ENCODE measurements at regions of chr2 and their contacts with region 1.

Region 1: GRCh38 chr2:102753563-102754159 is 8.2 kb upstream of the TMEM182 start:
- DNase-seq: peak; percentile 54
- H3K4me3 ChIP-seq: no peak overlapping the region
- H3K27ac ChIP-seq: no peak overlapping the region
- H3K4me1 ChIP-seq: peaks cover 2% of the 10 kb centered on the region
- H3K27me3 ChIP-seq: no peaks in the 10 kb centered on the region
- CTCF ChIP-seq: peak; percentile 59 to 62
- POLR2A ChIP-seq: no peak

Region 2: GRCh38 chr2:102304268-102304667 is 449.4 kb before region 1 on chr2:
- CTCF ChIA-PET with region 1: no interaction called
- POLR2A ChIA-PET with region 1: no interaction called
- dilution Hi-C with region 1: no loop called
- intact Hi-C with region 1: no loop called
- DNase-seq: peak; percentile 78
- H3K4me3 ChIP-seq: no peak overlapping the region
- H3K27ac ChIP-seq: peak overlapping the region; percentile 92
- H3K4me1 ChIP-seq: peaks cover 38% of the 10 kb centered on the region
- H3K27me3 ChIP-seq: no peaks in the 10 kb centered on the region
- CTCF ChIP-seq: no peak
- POLR2A ChIP-seq: no peak

Region 3: DNA sequence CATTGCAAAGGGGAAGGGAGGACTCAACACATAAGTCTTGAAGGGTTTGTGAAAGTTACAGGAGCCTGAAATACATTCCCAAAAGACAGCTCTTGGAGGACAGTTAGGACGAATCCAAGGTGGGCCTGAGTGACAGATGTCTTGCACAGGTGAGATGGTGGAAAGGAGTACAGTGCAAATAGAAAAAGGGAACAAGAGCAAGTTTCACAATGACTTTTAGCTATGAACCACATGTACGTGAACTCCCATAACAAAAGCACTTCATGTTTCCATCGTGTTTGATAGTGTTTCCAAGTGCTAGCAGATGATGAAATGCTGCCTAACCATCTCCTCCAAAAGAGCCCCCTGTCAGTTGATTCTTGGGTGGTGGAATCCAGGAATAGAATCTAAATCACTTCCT is 328.9 kb before region 1 on chr2:
- CTCF ChIA-PET with region 1: no interaction called
- POLR2A ChIA-PET with region 1: no interaction called
- dilution Hi-C with region 1: no loop called
- intact Hi-C with region 1: no loop called
- DNase-seq: no peak
- H3K4me3 ChIP-seq: no peak overlapping the region
- H3K27ac ChIP-seq: no peak overlapping the region
- H3K4me1 ChIP-seq: no peaks in the 10 kb centered on the region
- H3K27me3 ChIP-seq: peaks cover 2 to 11% of the 10 kb centered on the region in 2 experiments
- CTCF ChIP-seq: no peak
- POLR2A ChIP-seq: no peak

Region 4: DNA sequence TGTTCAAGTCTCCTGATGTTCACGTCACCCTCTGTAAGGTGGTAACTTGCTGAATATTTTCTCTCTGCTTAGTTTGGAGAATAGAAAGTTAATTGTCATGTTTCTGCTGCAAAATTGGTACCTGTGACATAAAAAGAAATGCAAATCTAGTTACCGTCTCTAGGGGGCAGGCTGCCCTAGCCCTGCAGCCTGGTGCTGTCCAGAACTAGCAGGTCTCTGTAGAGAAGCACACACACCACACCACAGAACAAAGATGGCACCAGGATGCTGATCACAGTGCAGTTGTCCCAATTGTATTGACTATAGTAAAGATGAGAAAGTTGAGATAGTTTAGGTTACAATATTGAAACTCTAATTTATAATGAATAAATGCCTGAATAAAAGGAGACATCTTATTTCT is 233.6 kb before region 1 on chr2:
- CTCF ChIA-PET with region 1: no interaction called
- POLR2A ChIA-PET with region 1: no interaction called
- dilution Hi-C with region 1: no loop called
- intact Hi-C with region 1: no loop called
- DNase-seq: peak; percentile 24
- H3K4me3 ChIP-seq: no peak overlapping the region
- H3K27ac ChIP-seq: no peak overlapping the region
- H3K4me1 ChIP-seq: no peaks in the 10 kb centered on the region
- H3K27me3 ChIP-seq: peaks cover 0 to under 1% of the 10 kb centered on the region in 2 experiments
- CTCF ChIP-seq: peak; percentile 54 to 66
- POLR2A ChIP-seq: no peak

Region 5: GRCh38 chr2:102736410-102737409 is 17.0 kb before region 1 on chr2:
- CTCF ChIA-PET with region 1: interaction called, 70 read pairs
- POLR2A ChIA-PET with region 1: no interaction called
- dilution Hi-C with region 1: no loop called
- intact Hi-C with region 1: no loop called
- DNase-seq: peak; percentile 76
- H3K4me3 ChIP-seq: peak overlapping the region; percentile 29 to 89 (median 85)
- H3K27ac ChIP-seq: no peak overlapping the region
- H3K4me1 ChIP-seq: peaks cover 11% of the 10 kb centered on the region
- H3K27me3 ChIP-seq: no peaks in the 10 kb centered on the region
- CTCF ChIP-seq: peak in 1 of 2 donors; percentile 3
- POLR2A ChIP-seq: peak; percentile 84

Region 6: DNA sequence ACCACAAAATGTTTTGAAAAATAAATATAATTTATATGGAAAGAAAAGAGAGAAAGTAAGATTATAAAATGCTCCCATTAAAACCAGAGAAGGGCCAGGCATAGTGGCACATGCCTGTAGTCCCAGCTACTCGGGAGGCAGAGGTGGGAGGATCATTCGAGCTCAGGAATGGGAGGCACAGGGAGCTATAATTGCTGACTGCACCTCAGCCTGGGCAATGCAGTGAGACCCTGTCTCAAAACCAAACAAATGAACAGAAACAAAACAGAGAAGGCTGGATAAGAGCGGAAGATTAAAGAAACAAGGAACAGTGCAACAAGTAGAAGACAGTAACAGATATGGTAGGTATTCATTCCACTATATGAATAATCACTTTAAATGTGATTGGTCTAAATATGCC is 10.4 kb before region 1 on chr2:
- CTCF ChIA-PET with region 1: interaction called, 70 read pairs
- POLR2A ChIA-PET with region 1: no interaction called
- dilution Hi-C with region 1: no loop called
- intact Hi-C with region 1: no loop called
- DNase-seq: no peak
- H3K4me3 ChIP-seq: no peak overlapping the region
- H3K27ac ChIP-seq: no peak overlapping the region
- H3K4me1 ChIP-seq: no peaks in the 10 kb centered on the region
- H3K27me3 ChIP-seq: no peaks in the 10 kb centered on the region
- CTCF ChIP-seq: no peak
- POLR2A ChIP-seq: no peak

Region 7: GRCh38 chr2:102771114-102771513 is 17.5 kb after region 1 on chr2:
- CTCF ChIA-PET with region 1: interaction called, 86 read pairs
- POLR2A ChIA-PET with region 1: no interaction called
- dilution Hi-C with region 1: no loop called
- intact Hi-C with region 1: no loop called
- DNase-seq: no peak
- H3K4me3 ChIP-seq: no peak overlapping the region
- H3K27ac ChIP-seq: no peak overlapping the region
- H3K4me1 ChIP-seq: no peaks in the 10 kb centered on the region
- H3K27me3 ChIP-seq: no peaks in the 10 kb centered on the region
- CTCF ChIP-seq: no peak
- POLR2A ChIP-seq: no peak

Region 8: DNA sequence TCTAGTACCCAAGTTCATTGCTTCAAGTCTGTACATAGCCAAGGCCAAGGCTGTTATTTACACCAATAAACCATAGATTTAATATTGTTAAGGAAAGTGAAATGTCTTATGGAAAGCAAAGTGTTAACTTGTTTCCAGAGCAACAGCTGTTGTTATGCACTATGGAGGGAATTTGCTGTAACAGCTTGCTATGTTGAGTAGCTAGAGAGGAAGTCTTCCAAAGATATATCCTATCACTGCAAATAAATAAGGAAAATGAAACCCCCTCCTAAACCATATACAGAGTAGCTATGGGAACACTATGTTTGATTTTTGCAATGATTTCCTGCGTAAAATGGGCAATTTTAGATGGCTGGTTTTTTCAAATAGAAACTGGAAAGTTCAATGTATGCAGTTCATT is 29.3 kb after region 1 on chr2:
- CTCF ChIA-PET with region 1: interaction called, 13 read pairs
- POLR2A ChIA-PET with region 1: no interaction called
- dilution Hi-C with region 1: no loop called
- intact Hi-C with region 1: no loop called
- DNase-seq: no peak
- H3K4me3 ChIP-seq: no peak overlapping the region
- H3K27ac ChIP-seq: no peak overlapping the region
- H3K4me1 ChIP-seq: no peaks in the 10 kb centered on the region
- H3K27me3 ChIP-seq: no peaks in the 10 kb centered on the region
- CTCF ChIP-seq: no peak
- POLR2A ChIP-seq: no peak

Region 9: GRCh38 chr2:102806250-102806837 is 52.7 kb after region 1 on chr2:
- CTCF ChIA-PET with region 1: interaction called, 311 read pairs
- POLR2A ChIA-PET with region 1: no interaction called
- dilution Hi-C with region 1: no loop called
- intact Hi-C with region 1: loop called (anchors 1 kb)
- DNase-seq: peak; percentile 79
- H3K4me3 ChIP-seq: no peak overlapping the region
- H3K27ac ChIP-seq: no peak overlapping the region
- H3K4me1 ChIP-seq: no peaks in the 10 kb centered on the region
- H3K27me3 ChIP-seq: no peaks in the 10 kb centered on the region
- CTCF ChIP-seq: peak; percentile 83 to 88
- POLR2A ChIP-seq: no peak

Measured in endothelial cell of umbilical vein (primary cell).